PC-3 (cell line): ENCODE measurements at regions of chr11 and their contacts with region 1.

Region 1: GRCh38 chr11:123246749-123247495 is 51.9 kb upstream of the CLMP start:
- DNase-seq: peak; percentile 92
- ATAC-seq: peak; percentile 91
- H3K4me3 ChIP-seq: no peak overlapping the region
- H3K27ac ChIP-seq: no peak overlapping the region
- H3K4me1 ChIP-seq: peaks cover 14% of the 10 kb centered on the region
- H3K27me3 ChIP-seq: no peaks in the 10 kb centered on the region
- CTCF ChIP-seq: peak; percentile 99

Region 2: GRCh38 chr11:122998727-122999366 is 248.1 kb before region 1 on chr11:
- CTCF ChIA-PET with region 1: no interaction called
- POLR2A ChIA-PET with region 1: no interaction called
- intact Hi-C with region 1: no loop called
- DNase-seq: peak; percentile 34
- ATAC-seq: peak; percentile 78
- H3K4me3 ChIP-seq: no peak overlapping the region
- H3K27ac ChIP-seq: no peak overlapping the region
- H3K4me1 ChIP-seq: no peaks in the 10 kb centered on the region
- H3K27me3 ChIP-seq: peaks cover 32% of the 10 kb centered on the region
- CTCF ChIP-seq: no peak

Region 3: GRCh38 chr11:123054301-123055065 is 192.4 kb before region 1 on chr11:
- CTCF ChIA-PET with region 1: interaction called, 7 read pairs
- POLR2A ChIA-PET with region 1: interaction called, 13 read pairs
- intact Hi-C with region 1: no loop called
- DNase-seq: peak; percentile 89
- ATAC-seq: peak; percentile 82
- H3K4me3 ChIP-seq: no peak overlapping the region
- H3K27ac ChIP-seq: no peak overlapping the region
- H3K4me1 ChIP-seq: peaks cover 24% of the 10 kb centered on the region
- H3K27me3 ChIP-seq: no peaks in the 10 kb centered on the region
- CTCF ChIP-seq: peak; percentile 87

Region 4: DNA sequence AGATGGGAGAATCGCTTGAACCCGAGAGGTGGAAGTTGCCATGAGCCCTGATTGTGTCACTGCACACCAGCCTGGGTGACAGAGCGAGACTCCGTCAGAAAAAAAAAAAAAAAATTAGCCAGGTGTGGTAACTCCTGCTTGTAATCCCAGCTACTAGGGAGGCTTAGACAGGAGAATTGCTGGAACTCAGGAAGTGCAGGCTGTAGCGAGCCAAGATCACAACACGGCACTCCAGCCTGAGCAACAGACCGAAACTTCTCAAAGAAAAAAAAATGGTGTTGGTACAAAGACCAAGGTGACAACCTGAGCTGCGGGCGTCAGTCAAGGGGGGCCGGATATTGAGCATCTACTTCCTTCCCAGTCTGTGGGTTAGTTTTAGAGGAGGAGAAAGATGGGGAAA is 136.6 kb before region 1 on chr11:
- CTCF ChIA-PET with region 1: interaction called, 48 read pairs
- POLR2A ChIA-PET with region 1: interaction called, 3 read pairs
- intact Hi-C with region 1: loop called (anchors 1 kb)
- DNase-seq: no peak
- ATAC-seq: no peak
- H3K4me3 ChIP-seq: no peak overlapping the region
- H3K27ac ChIP-seq: no peak overlapping the region
- H3K4me1 ChIP-seq: peaks cover 7% of the 10 kb centered on the region
- H3K27me3 ChIP-seq: no peaks in the 10 kb centered on the region
- CTCF ChIP-seq: no peak

Region 5: GRCh38 chr11:123174196-123175183 is 72.4 kb before region 1 on chr11:
- CTCF ChIA-PET with region 1: interaction called, 3 read pairs
- POLR2A ChIA-PET with region 1: no interaction called
- intact Hi-C with region 1: loop called (anchors 5 kb)
- DNase-seq: peak; percentile 97
- ATAC-seq: peak; percentile 50
- H3K4me3 ChIP-seq: no peak overlapping the region
- H3K27ac ChIP-seq: peak overlapping the region; percentile 81
- H3K4me1 ChIP-seq: peaks cover 49% of the 10 kb centered on the region
- H3K27me3 ChIP-seq: no peaks in the 10 kb centered on the region
- CTCF ChIP-seq: no peak

Region 6: DNA sequence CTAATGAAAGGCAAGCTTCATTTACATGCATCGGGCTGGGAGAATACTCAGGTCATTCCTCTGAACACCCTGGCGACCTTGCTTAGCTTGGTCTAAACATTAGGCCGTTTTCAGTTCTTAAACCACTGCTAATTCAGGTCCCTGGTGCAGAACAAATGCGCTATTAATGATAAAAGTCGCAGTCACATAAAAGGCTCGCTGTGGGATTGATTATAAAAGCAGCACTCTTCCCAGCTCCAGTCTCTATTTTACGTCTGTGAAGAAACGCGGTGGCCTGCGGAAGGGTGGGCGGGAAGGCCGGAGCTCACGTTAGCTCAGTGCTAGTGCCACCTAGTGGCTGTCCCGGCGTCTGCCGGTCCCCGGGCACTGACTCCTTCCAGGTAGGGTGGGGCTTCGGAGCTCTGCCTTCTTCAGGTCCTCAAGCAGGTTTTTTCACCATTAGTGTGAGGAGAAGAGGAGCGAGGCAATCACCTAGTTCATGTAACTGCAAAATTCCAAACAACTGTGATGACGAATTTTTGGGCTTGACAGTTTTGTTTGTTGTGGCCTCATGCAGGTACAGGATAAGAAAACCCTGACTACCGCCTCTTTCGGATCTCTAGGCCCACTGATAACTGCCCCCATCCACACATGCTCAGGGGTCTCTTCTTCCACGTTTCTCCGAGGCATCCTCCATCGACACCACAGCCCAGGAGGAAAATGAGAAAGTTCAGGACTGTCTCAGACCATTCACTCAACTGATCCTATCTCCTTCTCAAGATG is 14.6 kb after region 1 on chr11:
- CTCF ChIA-PET with region 1: interaction called, 18 read pairs
- POLR2A ChIA-PET with region 1: no interaction called
- intact Hi-C with region 1: no loop called
- DNase-seq: peak; percentile 96
- ATAC-seq: peak; percentile 92
- H3K4me3 ChIP-seq: peak overlapping the region; percentile 36; the same call in 1 of the 2 replicates
- H3K27ac ChIP-seq: no peak overlapping the region
- H3K4me1 ChIP-seq: peaks cover 24% of the 10 kb centered on the region
- H3K27me3 ChIP-seq: no peaks in the 10 kb centered on the region
- CTCF ChIP-seq: peak; percentile 99